MCF 10A (cell line): ENCODE measurements at regions of chr5 and their contacts with region 1.

Region 1: DNA sequence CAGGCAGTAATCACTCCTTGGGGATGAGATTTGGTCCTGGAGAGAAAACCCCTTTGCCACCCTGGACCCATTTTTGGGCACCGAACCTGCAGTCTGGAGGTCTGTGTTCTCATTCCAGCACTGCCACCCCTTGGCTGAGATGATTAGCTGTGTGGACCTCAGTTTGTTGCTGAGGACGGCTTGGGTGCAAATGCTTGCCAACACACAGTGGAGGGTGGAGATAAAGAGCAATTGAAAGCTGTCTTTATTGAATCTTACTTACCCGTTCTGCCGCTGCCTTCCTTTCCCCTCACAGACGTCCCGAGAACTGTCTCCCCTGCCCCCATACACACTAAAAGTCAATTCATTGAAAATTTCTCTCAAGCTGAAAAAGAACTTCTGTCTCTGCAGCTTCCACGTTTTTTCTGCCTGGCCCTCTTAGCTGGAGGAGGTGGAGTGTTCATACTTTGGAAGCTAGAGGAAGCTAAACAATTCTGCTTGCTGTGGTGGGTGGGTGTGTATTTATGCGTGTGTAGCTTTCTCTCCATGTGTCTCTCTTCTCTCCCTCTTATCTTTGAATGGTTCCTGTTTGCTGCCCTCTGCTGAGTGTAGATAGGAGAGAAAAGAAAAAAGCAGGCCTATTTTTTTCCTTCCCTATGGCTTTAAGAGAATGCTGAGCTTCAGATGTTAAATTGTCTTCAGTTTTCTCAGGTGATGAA is 6.6 kb downstream of the GALNT10 start:
- DNase-seq: peak; percentile 35
- H3K4me3 Mint-ChIP-seq: no peak overlapping the region
- H3K27ac Mint-ChIP-seq: no peak overlapping the region
- H3K4me1 Mint-ChIP-seq: peaks cover 53% of the 10 kb centered on the region
- H3K27me3 Mint-ChIP-seq: no peaks in the 10 kb centered on the region
- CTCF ChIP-seq: peak; percentile 20

Region 2: GRCh38 chr5:153974131-153974812 is 222.8 kb before region 1 on chr5:
- CTCF ChIA-PET with region 1: interaction called, 24 read pairs
- POLR2A ChIA-PET with region 1: no interaction called
- intact Hi-C with region 1: no loop called
- DNase-seq: peak; percentile 68
- H3K4me3 Mint-ChIP-seq: no peak overlapping the region
- H3K27ac Mint-ChIP-seq: no peak overlapping the region
- H3K4me1 Mint-ChIP-seq: no peaks in the 10 kb centered on the region
- H3K27me3 Mint-ChIP-seq: peaks cover 21% of the 10 kb centered on the region
- CTCF ChIP-seq: peak; percentile 94

Region 3: DNA sequence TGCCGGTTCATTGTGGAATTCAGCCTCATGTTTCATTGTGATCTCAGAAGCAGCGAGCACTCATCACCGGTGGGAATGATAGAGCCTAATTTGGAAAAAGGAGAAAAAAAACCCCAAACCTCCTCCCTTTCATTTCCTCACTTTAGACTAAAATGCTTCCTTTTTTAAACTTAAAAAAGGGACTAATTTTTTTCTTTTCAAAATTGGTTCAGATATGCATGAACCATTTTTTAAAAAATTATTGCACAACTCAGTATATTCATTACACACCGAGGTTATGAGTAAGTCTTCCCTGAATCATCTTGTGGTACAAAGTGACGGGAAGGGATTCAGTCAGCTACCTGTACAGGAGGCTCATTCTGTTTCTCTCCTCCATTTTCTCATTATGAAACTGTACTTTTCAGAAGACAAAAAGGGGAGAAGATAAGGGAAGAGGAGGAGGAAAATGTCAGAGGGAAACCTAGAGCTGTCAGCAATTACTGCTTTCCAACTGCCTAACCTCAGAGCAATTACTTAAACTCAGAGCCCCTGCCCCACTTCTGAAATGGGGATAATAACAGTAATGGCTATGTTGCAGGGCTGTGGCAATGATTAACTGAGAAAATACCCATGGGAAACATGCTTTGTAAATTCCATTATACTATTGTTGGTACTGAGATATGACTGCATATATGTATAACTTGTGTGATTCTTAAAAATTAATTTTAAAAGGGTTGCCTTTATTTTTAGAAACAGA is 17.4 kb after region 1 on chr5:
- CTCF ChIA-PET with region 1: interaction called, 19 read pairs
- POLR2A ChIA-PET with region 1: interaction called, 31 read pairs
- intact Hi-C with region 1: no loop called
- DNase-seq: peak; percentile 92
- H3K4me3 Mint-ChIP-seq: peak overlapping the region; percentile 63
- H3K27ac Mint-ChIP-seq: peak overlapping the region; percentile 85
- H3K4me1 Mint-ChIP-seq: peaks cover 27% of the 10 kb centered on the region
- H3K27me3 Mint-ChIP-seq: no peaks in the 10 kb centered on the region
- CTCF ChIP-seq: no peak